Dendritic cell treated with granulocyte-macrophage colony-stimulating factor and Interleukin-4, amounts not matched to agents 40 ng/mL and 50 ng/mL, for 4 days (primary cell): ENCODE measurements at regions of chr19 and their contacts with region 1.

Region 1: GRCh38 chr19:11694533-11695439 is 44.0 kb downstream of the ZNF823 start:
- H3K4me3 Mint-ChIP-seq: peak overlapping the region; percentile 95
- H3K27ac Mint-ChIP-seq: peak overlapping the region; percentile 78
- H3K4me1 Mint-ChIP-seq: peaks cover 17% of the 10 kb centered on the region
- H3K27me3 Mint-ChIP-seq: peaks cover 20% of the 10 kb centered on the region

Region 2: DNA sequence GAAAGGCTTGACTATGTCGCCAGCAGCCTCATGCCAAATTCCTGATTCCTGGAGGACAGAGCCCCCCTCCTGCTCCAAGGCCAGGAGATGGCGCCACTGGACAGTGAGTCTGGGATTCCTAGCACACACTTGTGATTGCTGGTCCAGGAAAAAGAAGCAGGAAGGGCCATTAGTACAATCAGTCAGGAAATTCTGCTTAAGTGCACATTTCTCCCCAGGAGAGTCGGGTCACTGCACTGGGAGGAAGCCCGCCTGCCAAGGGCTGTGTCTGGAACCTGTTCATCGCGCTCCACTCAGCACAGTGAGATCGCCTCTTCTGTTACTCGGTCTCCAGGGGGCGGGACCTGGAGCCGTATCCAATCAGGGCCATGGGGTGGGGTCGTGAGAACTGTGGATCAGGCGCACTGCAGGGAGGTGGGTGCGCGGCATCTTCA is 21.2 kb before region 1 on chr19:
- intact Hi-C with region 1: no loop called
- H3K4me3 Mint-ChIP-seq: peak overlapping the region; percentile 54
- H3K27ac Mint-ChIP-seq: no peak overlapping the region
- H3K4me1 Mint-ChIP-seq: peaks cover 7% of the 10 kb centered on the region
- H3K27me3 Mint-ChIP-seq: peaks cover 24% of the 10 kb centered on the region

Region 3: DNA sequence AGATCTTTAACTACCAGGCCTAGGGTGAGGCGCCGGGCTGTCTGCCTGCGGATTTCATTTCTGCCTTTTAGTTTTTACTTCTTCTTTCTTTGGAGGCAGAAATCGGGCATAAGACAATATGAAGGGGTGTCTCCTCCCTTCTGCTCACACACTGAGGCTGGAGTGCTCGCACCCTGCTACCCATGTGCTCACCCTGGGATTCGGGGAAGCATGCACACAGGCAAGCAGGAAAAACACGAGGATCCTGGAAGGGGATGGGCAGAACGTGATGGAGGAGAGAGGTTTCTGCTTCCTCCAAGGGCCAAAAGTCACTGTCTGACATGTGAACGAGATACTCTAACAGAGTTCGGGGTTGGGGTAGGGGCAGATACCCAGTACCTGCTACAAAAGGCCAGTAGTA is 15.5 kb after region 1 on chr19:
- intact Hi-C with region 1: no loop called
- H3K4me3 Mint-ChIP-seq: no peak overlapping the region
- H3K27ac Mint-ChIP-seq: no peak overlapping the region
- H3K4me1 Mint-ChIP-seq: peaks cover 11% of the 10 kb centered on the region
- H3K27me3 Mint-ChIP-seq: peaks cover 1% of the 10 kb centered on the region

Region 4: DNA sequence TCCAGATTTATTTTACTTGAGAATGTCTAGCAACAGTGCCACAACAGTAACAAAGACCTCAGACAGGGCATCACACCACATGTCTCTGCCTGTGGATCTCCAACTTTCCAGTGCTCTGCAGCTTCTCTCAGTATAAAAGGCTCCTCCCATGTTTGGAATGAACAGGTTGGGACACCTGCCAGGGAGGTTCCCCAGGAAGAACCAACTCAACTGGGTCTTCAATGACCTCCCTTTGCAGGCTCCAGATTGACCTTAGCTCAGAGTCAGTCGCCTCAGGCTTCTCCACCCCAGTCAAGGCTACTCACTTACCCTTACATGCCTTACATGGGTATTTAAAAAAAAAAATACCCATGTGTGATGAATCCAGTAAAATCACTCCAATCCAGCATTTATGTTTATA is 40.6 kb after region 1 on chr19:
- intact Hi-C with region 1: no loop called
- H3K4me3 Mint-ChIP-seq: no peak overlapping the region
- H3K27ac Mint-ChIP-seq: peak overlapping the region; percentile 60
- H3K4me1 Mint-ChIP-seq: peaks cover 28% of the 10 kb centered on the region
- H3K27me3 Mint-ChIP-seq: peaks cover 3% of the 10 kb centered on the region

Region 5: DNA sequence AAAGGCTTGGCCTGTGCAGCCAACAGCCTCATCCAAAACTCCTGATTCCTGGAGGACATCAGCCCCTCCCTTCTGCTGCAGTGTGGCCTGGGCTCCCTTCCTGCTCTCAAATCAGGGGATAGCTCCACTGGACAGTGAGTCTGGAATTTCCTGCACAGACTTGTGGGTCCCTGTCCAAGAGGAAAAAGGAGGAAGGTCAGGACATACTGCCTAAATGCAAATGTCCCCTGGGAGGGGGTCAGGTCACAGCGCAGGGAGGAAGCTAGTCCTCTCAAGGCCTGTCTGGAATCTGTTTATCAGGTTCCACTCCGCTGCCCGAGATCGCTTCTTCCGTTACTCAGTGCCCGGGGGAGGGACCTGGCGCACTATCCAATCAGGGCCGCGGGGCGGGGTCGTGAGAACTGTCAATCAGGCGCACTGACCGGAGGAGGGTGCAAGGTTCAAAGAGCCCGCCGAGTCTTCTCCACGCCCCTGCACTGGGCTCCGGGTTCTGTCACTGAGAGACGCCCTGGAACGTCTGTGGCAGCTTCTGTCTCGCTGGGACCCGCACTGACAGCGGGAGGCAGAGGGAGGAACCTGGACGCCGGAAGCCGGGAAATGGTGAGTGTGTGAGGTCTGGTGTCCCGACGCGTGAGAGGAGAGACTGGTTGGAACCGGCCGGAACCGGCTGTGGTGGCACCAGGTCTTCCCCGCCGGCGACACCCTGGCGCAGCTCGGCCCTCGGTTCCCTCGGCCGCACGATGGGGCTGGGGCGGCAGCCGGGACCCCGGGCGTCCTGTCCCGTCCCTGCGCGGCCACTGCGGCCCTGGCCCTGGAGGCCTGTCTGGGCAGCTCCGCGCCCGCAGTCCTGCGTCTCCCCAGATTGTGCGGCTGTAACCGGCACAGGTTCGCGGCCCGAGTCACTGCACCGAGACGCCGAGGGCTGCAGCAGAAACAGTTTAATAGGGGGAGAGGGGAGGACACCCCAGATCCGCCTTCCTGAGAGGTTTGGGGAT is 72.1 kb after region 1 on chr19 and contains the start of gene ZNF441:
- intact Hi-C with region 1: loop called (anchors 10 kb)
- H3K4me3 Mint-ChIP-seq: peak within 1 kb of the TSS; percentile 96
- H3K27ac Mint-ChIP-seq: peak within 1 kb of the TSS; percentile 95
- H3K4me1 Mint-ChIP-seq: peaks cover 16% of the 10 kb centered on the region
- H3K27me3 Mint-ChIP-seq: peaks cover 11% of the 10 kb centered on the region